ENCODE measurements at regions of chr3 and their contacts with region 1.

Region 1: DNA sequence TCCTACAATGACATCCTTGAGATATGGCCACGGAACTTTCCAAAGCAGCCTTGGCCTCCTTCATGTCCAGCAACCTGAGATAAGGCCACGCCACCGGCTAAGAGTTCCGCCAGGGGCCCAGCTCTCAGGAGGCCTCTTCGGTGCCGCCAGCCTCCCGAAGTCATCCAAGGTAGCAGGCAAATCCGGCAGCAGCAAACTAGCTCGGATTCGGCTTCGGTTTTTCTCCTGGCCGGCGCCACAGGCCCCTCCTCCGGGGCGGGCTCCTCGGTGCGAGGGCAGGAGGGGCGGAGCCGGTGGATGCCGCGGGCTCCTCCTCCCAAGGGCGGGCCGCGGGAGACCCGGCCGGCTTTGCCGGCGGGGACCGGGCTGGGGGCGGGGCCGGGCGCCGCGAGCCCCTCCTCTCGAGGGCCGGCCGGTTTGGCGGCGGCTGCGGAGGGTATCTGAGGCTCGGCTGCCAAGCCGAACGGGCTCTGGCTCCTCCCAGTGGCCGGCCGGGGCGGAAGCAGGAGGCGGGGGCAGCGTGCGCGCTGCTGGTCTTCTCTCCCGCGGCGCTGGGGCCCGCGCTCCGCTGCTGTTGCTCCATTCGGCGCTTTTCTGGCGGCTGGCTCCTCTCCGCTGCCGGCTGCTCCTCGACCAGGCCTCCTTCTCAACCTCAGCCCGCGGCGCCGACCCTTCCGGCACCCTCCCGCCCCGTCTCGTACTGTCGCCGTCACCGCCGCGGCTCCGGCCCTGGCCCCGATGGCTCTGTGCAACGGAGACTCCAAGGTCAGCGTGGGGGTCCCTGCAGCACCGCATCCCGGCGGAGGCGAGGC is at the start of gene GMPS:
- DNase-seq: peak; percentile 96
- ATAC-seq: peak; percentile 95
- H3K4me3 ChIP-seq: peak within 1 kb of the TSS; percentile 65 to 95 (median 93)
- H3K4me3 Mint-ChIP-seq: peak within 1 kb of the TSS; percentile 96
- H3K27ac ChIP-seq: peak within 1 kb of the TSS; percentile 75 to 86
- H3K27ac Mint-ChIP-seq: peak within 1 kb of the TSS; percentile 94
- H3K4me1 ChIP-seq: peaks cover 14 to 19% of the 10 kb centered on the region in 2 donors
- H3K4me1 Mint-ChIP-seq: peaks cover 23% of the 10 kb centered on the region
- H3K27me3 ChIP-seq: no peaks in the 10 kb centered on the region
- H3K27me3 Mint-ChIP-seq: no peaks in the 10 kb centered on the region
- CTCF ChIP-seq: peak; percentile 45
- total RNA-seq, gene GMPS: 28.0 and 30.8 TPM in 2 replicates

Region 2: DNA sequence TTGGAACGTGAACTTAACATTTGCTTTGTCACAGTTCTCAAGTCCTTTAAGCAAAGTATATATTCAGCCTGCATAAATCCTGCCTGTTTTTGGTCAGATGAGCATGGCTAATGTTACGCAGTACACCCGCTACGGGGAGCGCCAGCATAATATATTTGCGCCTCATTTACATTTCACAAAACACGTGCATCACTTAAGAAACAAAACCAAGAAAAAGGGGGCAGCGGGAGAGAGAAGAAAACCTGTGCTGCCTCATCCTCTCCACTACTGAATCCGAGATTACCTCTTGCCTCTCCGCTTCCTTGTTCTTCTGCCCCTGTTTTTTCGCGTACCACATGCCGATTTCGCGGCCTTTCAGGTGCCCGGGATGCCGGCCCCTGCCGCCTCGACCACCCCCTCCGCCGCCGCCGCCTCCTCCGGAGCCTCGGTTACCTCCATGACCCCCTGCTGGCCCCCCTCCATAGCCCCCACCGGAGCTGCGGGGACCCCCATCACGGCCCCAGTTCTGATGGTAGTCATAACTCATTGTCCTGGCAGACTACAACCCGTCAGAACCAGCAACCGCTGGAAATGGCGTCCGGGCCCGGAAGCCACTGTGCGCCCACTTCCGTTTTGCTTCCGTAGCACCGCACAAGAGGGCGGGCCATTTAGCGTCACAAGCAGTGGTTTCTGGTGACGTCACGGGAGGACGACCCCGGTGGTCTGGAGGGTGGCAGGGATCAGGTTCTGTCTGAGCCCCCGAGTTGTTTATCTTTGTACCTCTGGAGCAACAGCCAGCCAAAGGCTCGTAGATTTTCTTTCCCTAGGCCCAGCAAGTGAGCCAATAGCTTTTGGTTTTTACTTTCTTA is 1546.2 kb before region 1 on chr3 and contains the start of gene DHX36:
- CTCF ChIA-PET with region 1: no interaction called
- POLR2A ChIA-PET with region 1: no interaction called
- intact Hi-C with region 1: loop called (anchors 1 kb)
- DNase-seq: peak; percentile 94
- ATAC-seq: peak; percentile 90
- H3K4me3 ChIP-seq: peak within 1 kb of the TSS; percentile 80 to 92 (median 88)
- H3K4me3 Mint-ChIP-seq: peak within 1 kb of the TSS; percentile 98
- H3K27ac ChIP-seq: peak within 1 kb of the TSS; percentile 94 to 98
- H3K27ac Mint-ChIP-seq: peak within 1 kb of the TSS; percentile 98
- H3K4me1 ChIP-seq: peaks cover 42 to 44% of the 10 kb centered on the region in 2 donors
- H3K4me1 Mint-ChIP-seq: peaks cover 38% of the 10 kb centered on the region
- H3K27me3 ChIP-seq: no peaks in the 10 kb centered on the region
- H3K27me3 Mint-ChIP-seq: peaks cover 3% of the 10 kb centered on the region
- CTCF ChIP-seq: no peak
- total RNA-seq, gene DHX36: 113 and 132 TPM in 2 replicates

Region 3: GRCh38 chr3:155744626-155745324 is 125.6 kb before region 1 on chr3 and contains the start of gene PLCH1:
- CTCF ChIA-PET with region 1: no interaction called
- POLR2A ChIA-PET with region 1: no interaction called
- intact Hi-C with region 1: loop called (anchors 5 kb)
- DNase-seq: peak; percentile 70
- ATAC-seq: peak; percentile 71
- H3K4me3 ChIP-seq: peak within 1 kb of the TSS; percentile 44 to 83 (median 72)
- H3K4me3 Mint-ChIP-seq: peak within 1 kb of the TSS; percentile 92
- H3K27ac ChIP-seq: peak within 1 kb of the TSS in 1 of 2 donors; percentile 32
- H3K27ac Mint-ChIP-seq: peak within 1 kb of the TSS; percentile 64
- H3K4me1 ChIP-seq: peaks cover 9 to 28% of the 10 kb centered on the region in 2 donors
- H3K4me1 Mint-ChIP-seq: peaks cover 23% of the 10 kb centered on the region
- H3K27me3 ChIP-seq: peaks cover 0 to 35% (median 18%) of the 10 kb centered on the region in 4 experiments
- H3K27me3 Mint-ChIP-seq: peaks cover 28% of the 10 kb centered on the region
- CTCF ChIP-seq: no peak
- total RNA-seq, gene PLCH1: 0.27 and 0.39 TPM in 2 replicates

Region 4: DNA sequence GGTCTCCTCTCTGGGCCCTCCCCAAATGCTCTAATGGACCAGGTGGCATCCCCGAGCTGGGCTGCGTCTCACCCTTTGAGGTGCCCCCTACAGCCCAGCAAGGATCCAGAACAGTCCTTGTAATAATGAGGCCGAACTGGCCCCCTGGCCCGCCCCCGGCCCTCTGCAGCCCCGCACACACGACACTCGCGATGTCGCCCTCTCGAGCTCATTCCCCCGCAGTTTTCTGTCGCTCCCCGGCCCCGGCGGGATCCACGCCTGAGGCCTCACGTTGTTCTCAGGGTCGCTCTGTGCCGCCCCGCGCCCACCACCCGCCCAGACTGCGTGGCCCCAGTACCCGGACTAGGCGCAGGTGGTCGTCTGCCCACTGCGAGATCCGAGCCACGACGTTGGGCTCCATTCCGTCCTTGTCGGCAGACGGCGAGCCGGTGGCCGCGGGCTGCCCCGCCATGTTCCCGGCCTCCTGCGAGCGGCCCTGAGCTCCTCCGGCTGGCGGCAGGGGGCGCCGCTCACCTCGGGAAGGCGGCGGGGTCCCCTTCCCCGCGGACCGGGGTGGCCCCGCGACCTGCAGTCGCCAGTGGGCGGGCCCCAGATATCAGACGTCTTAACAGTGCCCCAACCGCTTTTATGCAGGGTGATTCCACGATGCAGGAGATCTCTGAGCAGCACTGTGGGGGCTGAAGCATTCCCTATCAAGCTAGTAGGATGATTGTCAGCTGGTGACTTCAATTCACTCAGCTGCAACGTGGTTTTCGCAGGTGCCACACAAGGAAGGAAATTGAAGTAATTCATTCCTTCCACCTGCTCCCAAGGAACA is 64.3 kb before region 1 on chr3 and contains the start of gene C3orf33:
- CTCF ChIA-PET with region 1: interaction called, 27 read pairs
- POLR2A ChIA-PET with region 1: interaction called, 5 read pairs
- intact Hi-C with region 1: loop called (anchors 1 kb)
- DNase-seq: peak; percentile 85
- ATAC-seq: peak; percentile 95
- H3K4me3 ChIP-seq: peak within 1 kb of the TSS; percentile 30 to 80 (median 69)
- H3K4me3 Mint-ChIP-seq: peak within 1 kb of the TSS; percentile 92
- H3K27ac ChIP-seq: peak within 1 kb of the TSS; percentile 59 to 80
- H3K27ac Mint-ChIP-seq: peak within 1 kb of the TSS; percentile 75
- H3K4me1 ChIP-seq: peaks cover 3 to 12% of the 10 kb centered on the region in 2 donors
- H3K4me1 Mint-ChIP-seq: peaks cover 5% of the 10 kb centered on the region
- H3K27me3 ChIP-seq: peaks cover 0 to 2% (median 0%) of the 10 kb centered on the region in 4 experiments
- H3K27me3 Mint-ChIP-seq: peaks cover 15% of the 10 kb centered on the region
- CTCF ChIP-seq: peak; percentile 94
- total RNA-seq, gene C3orf33: 1.7 and 1.8 TPM in 2 replicates

Region 5: GRCh38 chr3:155854141-155854940 is 16.0 kb before region 1 on chr3 and contains the start of gene SLC33A1:
- CTCF ChIA-PET with region 1: interaction called, 5 read pairs
- POLR2A ChIA-PET with region 1: interaction called, 5 read pairs
- intact Hi-C with region 1: loop called (anchors 1 kb)
- DNase-seq: peak; percentile 100
- ATAC-seq: peak; percentile 90
- H3K4me3 ChIP-seq: peak within 1 kb of the TSS; percentile 82 to 99 (median 92)
- H3K4me3 Mint-ChIP-seq: peak within 1 kb of the TSS; percentile 97
- H3K27ac ChIP-seq: peak within 1 kb of the TSS; percentile 90 to 97
- H3K27ac Mint-ChIP-seq: peak within 1 kb of the TSS; percentile 99
- H3K4me1 ChIP-seq: peaks cover 25 to 37% of the 10 kb centered on the region in 2 donors
- H3K4me1 Mint-ChIP-seq: peaks cover 36% of the 10 kb centered on the region
- H3K27me3 ChIP-seq: no peaks in the 10 kb centered on the region
- H3K27me3 Mint-ChIP-seq: no peaks in the 10 kb centered on the region
- CTCF ChIP-seq: no peak
- total RNA-seq, gene SLC33A1: 26.9 and 29.4 TPM in 2 replicates

Region 6: DNA sequence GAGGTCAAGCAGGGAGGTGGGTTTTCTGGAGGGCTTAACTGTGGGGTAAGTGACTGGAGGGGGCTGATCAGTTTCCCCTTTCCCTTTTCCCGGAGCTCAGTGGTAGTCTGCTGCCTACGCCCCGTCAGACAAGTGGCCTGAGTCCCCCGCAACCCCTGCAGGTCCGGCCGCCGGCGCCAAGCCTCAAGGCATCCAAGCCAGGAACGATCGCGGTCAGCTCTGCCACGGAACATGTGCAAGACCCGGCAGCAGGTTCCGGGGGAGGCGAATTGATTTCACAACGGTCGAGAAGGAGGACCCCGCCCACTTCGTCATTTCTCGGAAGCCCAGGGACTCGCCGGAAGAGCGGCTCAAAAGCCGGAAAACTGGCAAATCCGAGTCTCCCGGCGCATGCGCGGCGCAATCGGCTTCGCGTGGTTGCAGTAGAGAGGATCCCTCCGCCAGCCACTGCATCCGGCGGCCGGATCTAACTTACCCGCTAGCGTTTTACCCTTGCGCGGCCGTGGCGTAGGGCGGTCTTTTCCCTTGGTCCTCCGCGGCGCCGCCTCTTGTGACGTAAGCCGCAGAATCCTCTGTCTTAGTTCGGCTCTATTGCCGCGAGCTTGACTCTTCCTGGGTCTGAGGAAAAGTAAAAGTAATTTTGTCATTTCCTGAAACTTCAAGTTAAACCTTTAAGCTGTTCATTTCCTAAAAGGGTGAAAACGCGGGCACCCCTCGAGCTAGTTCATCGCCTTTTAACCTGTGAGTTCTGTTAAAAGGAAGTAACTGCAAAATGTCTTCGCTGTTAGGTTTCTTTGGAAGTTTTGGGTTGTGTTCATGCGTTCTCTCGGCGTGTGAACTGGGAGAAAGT is 1304.5 kb after region 1 on chr3:
- CTCF ChIA-PET with region 1: no interaction called
- POLR2A ChIA-PET with region 1: no interaction called
- intact Hi-C with region 1: loop called (anchors 1 kb)
- DNase-seq: peak; percentile 99
- ATAC-seq: peak; percentile 91
- H3K4me3 ChIP-seq: peak overlapping the region; percentile 85 to 98 (median 93)
- H3K4me3 Mint-ChIP-seq: peak overlapping the region; percentile 91
- H3K27ac ChIP-seq: peak overlapping the region; percentile 89 to 97
- H3K27ac Mint-ChIP-seq: peak overlapping the region; percentile 97
- H3K4me1 ChIP-seq: peaks cover 19% of the 10 kb centered on the region in 2 donors
- H3K4me1 Mint-ChIP-seq: peaks cover 23% of the 10 kb centered on the region
- H3K27me3 ChIP-seq: no peaks in the 10 kb centered on the region
- H3K27me3 Mint-ChIP-seq: no peaks in the 10 kb centered on the region
- CTCF ChIP-seq: no peak

Measured in B cell (primary cell).